ENCODE measurements at regions of chrX and their contacts with region 1.

Region 1: GRCh38 chrX:23907498-23908218 is at the starts of genes APOO and CXorf58:
- DNase-seq: peak; percentile 82 to 96
- ATAC-seq: peak; percentile 97 to 98
- H3K4me3 ChIP-seq: peak within 1 kb of the TSS; percentile 82
- H3K27ac ChIP-seq: peak within 1 kb of the TSS; percentile 91 to 99
- H3K4me1 ChIP-seq: peaks cover 10% of the 10 kb centered on the region; the same call in 2 of the 3 replicates
- CTCF ChIP-seq: peak; percentile 82
- EP300 ChIP-seq: no peak
- POLR2A ChIP-seq: peak; percentile 34; the same call in 1 of the 2 replicates
- RAD21 ChIP-seq: peak; percentile 57 to 64
- polyA plus RNA-seq, gene APOO: 48.5 and 59.4 TPM in 2 replicates
- polyA plus RNA-seq, gene CXorf58: 0.37 and 0.47 TPM in 2 replicates

Region 2: DNA sequence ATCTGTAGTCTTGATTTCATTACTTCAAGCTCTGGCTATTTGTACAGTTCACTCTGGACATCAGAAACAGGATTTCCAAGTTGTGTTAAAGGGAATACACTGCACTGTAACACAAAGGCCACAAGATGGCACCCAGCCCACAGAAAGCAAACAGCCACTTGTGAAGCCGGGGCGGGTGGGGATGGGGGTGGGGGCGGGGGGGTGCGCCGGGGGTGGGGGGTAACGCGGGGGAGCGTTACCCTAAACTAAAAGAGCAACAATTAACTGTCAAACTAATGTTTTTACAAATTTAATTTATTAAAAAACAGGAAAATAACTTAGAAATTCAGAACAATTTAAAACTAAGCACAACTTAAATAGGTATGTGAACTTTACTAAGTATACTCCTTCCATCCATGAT is 213.1 kb before region 1 on chrX:
- CTCF ChIA-PET with region 1: interaction called, 312 read pairs
- POLR2A ChIA-PET with region 1: no interaction called
- DNase-seq: peak; percentile 33 to 77
- ATAC-seq: peak; percentile 84 to 91
- H3K4me3 ChIP-seq: 0 out of 3 replicates have a peak overlapping the region, but pooled peaks have one; percentile 22
- H3K27ac ChIP-seq: peak overlapping the region; percentile 45 to 70; a peak in 3 of 6 replicates
- H3K4me1 ChIP-seq: no peaks in the 10 kb centered on the region
- CTCF ChIP-seq: peak; percentile 58
- EP300 ChIP-seq: no peak
- POLR2A ChIP-seq: no peak
- RAD21 ChIP-seq: peak; percentile 80 to 88

Region 3: DNA sequence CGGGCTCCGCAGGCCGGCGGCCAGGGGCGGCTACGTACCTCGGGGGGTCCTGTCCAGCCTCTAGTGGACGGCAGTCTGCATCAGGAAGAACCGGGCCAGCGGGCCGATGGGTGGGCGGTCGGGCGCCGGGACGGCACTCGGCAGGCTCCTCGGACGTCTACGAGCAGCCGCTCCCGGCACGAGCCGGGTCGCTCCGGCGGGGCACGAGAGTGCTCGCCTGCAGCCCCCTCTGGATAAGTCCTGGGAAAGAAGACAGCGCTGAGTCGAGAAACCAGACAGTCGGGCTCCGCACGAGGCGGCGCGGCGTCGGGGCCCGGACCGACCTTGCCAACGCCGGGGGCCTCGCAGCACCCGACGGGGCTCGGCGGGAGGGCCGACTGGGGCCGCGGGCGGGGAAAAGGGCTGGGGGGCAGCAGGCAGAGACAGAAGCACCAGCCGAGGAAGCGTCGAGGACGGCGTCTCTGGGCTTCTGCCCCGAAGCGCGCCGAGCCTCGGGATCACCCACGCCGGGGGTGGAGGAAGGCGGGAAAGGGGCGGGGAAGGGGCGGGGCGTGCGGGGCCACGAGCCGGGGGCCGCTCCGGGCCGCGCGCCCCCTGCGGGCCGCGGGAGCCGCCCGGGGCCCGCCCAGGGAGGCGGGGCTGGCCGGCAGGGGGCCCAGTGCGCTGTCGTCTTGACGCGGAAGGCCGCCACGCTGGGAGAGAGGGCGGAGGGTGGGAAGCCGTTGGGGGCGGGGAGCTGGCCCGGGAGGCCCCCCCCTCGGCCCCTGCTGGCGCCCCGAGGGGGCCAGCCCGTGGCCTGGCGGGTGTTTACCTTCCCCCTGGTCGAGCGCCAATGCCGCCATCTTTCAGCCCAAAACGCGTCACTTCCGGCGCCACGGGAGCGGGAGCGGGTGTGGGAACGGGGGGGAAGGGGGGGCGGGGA is 117.4 kb after region 1 on chrX:
- CTCF ChIA-PET with region 1: interaction called, 5 read pairs
- POLR2A ChIA-PET with region 1: interaction called, 10 read pairs
- DNase-seq: peak; percentile 73 to 93
- ATAC-seq: peak; percentile 84 to 89
- H3K4me3 ChIP-seq: peak overlapping the region; percentile 95
- H3K27ac ChIP-seq: peak overlapping the region; percentile 99
- H3K4me1 ChIP-seq: peaks cover 24% of the 10 kb centered on the region
- CTCF ChIP-seq: peak; percentile 44
- EP300 ChIP-seq: peak in 1 of 2 experiments; percentile 63; a peak in 2 of 5 replicates
- POLR2A ChIP-seq: peak; percentile 98
- RAD21 ChIP-seq: no peak; a peak in 2 of 5 replicates

Region 4: GRCh38 chrX:24054182-24055042 is 146.8 kb after region 1 on chrX and contains the start of gene EIF2S3:
- CTCF ChIA-PET with region 1: interaction called, 23 read pairs
- POLR2A ChIA-PET with region 1: interaction called, 15 read pairs
- DNase-seq: peak; percentile 77 to 98
- ATAC-seq: peak; percentile 94 to 98
- H3K4me3 ChIP-seq: no peak within 1 kb of the TSS
- H3K27ac ChIP-seq: no peak within 1 kb of the TSS
- H3K4me1 ChIP-seq: peaks cover 9% of the 10 kb centered on the region; the same call in 1 of the 3 replicates
- CTCF ChIP-seq: peak; percentile 71
- EP300 ChIP-seq: no peak
- POLR2A ChIP-seq: peak; percentile 67
- RAD21 ChIP-seq: peak; percentile 41 to 46; a peak in 4 of 5 replicates
- polyA plus RNA-seq, gene EIF2S3: 214 and 219 TPM in 2 replicates